ENCODE measurements at regions of chr6 and their contacts with region 1.

Region 1: GRCh38 chr6:15776458-15776980 is 113.7 kb upstream of the DTNBP1 start:
- DNase-seq: peak; percentile 21
- H3K4me3 Mint-ChIP-seq: no peak overlapping the region
- H3K27ac Mint-ChIP-seq: peak overlapping the region; percentile 78
- H3K4me1 Mint-ChIP-seq: peaks cover 46% of the 10 kb centered on the region
- H3K27me3 Mint-ChIP-seq: no peaks in the 10 kb centered on the region

Region 2: DNA sequence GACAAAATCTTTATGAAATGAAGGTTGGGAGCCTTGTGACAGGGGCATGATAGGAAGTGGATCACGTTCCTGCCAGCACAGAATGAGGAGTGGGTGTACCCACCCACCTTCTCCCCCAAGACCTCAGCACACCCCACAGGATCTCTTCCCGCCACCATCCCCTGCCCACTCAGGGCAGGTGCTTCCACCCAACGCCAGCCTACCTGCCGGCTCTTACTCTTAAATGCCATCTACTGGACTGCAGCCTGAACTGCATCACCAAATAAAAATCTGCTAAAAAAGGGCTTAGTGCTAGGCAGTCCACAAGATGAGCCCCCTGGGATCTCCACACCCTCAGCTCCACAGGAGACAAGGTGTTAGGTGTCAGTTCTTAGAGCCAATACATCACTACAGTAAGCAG is 134.2 kb before region 1 on chr6:
- intact Hi-C with region 1: no loop called
- DNase-seq: no peak
- H3K4me3 Mint-ChIP-seq: no peak overlapping the region
- H3K27ac Mint-ChIP-seq: no peak overlapping the region
- H3K4me1 Mint-ChIP-seq: no peaks in the 10 kb centered on the region
- H3K27me3 Mint-ChIP-seq: no peaks in the 10 kb centered on the region

Region 3: GRCh38 chr6:15715060-15715459 is 61.5 kb before region 1 on chr6:
- intact Hi-C with region 1: loop called (anchors 1 kb)
- DNase-seq: no peak
- H3K4me3 Mint-ChIP-seq: no peak overlapping the region
- H3K27ac Mint-ChIP-seq: peak overlapping the region; percentile 45
- H3K4me1 Mint-ChIP-seq: peaks cover 11% of the 10 kb centered on the region
- H3K27me3 Mint-ChIP-seq: no peaks in the 10 kb centered on the region

Region 4: GRCh38 chr6:15879382-15880261 is 103.1 kb after region 1 on chr6:
- intact Hi-C with region 1: loop called (anchors 1 kb)
- DNase-seq: no peak
- H3K4me3 Mint-ChIP-seq: peak overlapping the region; percentile 53
- H3K27ac Mint-ChIP-seq: peak overlapping the region; percentile 63
- H3K4me1 Mint-ChIP-seq: peaks cover 34% of the 10 kb centered on the region
- H3K27me3 Mint-ChIP-seq: no peaks in the 10 kb centered on the region

Region 5: DNA sequence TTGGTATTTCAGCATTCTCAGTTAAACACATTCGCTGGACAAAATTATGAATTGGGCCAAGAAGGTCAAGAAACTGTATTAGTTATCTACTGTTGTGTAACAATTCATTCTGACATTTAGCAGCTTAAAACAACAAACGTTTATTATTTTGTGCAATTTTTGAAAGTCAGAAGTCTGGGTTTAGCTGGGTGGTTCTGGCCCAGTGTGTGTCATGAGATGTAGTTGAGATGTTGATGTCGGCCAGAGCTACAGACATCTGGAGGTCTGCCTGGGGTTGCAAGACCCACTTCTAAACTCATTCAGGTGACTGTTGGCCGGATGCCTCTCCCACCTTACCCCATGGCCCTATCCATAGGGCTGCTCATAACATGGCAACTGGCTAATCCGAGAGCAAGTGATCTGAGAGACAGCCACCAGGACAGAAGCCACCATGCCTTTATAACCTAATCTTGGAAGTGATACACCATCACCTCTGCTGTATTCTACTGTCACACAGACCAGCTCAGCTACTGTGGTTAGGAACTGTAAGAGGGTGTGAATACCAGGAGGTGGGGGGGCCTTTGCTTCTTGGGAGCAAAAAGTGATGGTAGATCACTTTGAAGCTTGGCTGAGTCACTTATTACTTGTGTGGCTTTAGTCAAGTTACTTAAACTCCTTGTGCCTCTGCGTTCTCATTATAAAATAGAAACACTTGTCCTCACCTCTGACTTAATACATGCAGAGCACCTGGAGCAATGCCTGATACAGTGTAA is 135.4 kb after region 1 on chr6:
- intact Hi-C with region 1: loop called (anchors 1 kb)
- DNase-seq: peak; percentile 15
- H3K4me3 Mint-ChIP-seq: no peak overlapping the region
- H3K27ac Mint-ChIP-seq: peak overlapping the region; percentile 24
- H3K4me1 Mint-ChIP-seq: peaks cover 13% of the 10 kb centered on the region
- H3K27me3 Mint-ChIP-seq: no peaks in the 10 kb centered on the region

Region 6: GRCh38 chr6:15987569-15987968 is 211.1 kb after region 1 on chr6:
- intact Hi-C with region 1: loop called (anchors 1 kb)
- DNase-seq: no peak
- H3K4me3 Mint-ChIP-seq: no peak overlapping the region
- H3K27ac Mint-ChIP-seq: no peak overlapping the region
- H3K4me1 Mint-ChIP-seq: peaks cover 28% of the 10 kb centered on the region
- H3K27me3 Mint-ChIP-seq: peaks cover 3% of the 10 kb centered on the region

Region 7: GRCh38 chr6:16136621-16137450 is 360.3 kb after region 1 on chr6:
- intact Hi-C with region 1: loop called (anchors 1 kb)
- DNase-seq: no peak
- H3K4me3 Mint-ChIP-seq: peak overlapping the region; percentile 73
- H3K27ac Mint-ChIP-seq: peak overlapping the region; percentile 95
- H3K4me1 Mint-ChIP-seq: peaks cover 78% of the 10 kb centered on the region
- H3K27me3 Mint-ChIP-seq: no peaks in the 10 kb centered on the region